Heart right ventricle (tissue), 16 donors: ENCODE measurements at regions of chr1 and their contacts with region 1.

Region 1: GRCh38 chr1:222124602-222125001 is 382.7 kb upstream of the DUSP10 start:
- DNase-seq: no peak
- ATAC-seq: no peak
- H3K4me3 ChIP-seq: no peak overlapping the region
- H3K27ac ChIP-seq: no peak overlapping the region
- H3K4me1 ChIP-seq: no peaks in the 10 kb centered on the region
- H3K27me3 ChIP-seq: peaks cover 0 to 4% (median 0%) of the 10 kb centered on the region in 7 donors
- CTCF ChIP-seq: peak in 1 of 9 donors; percentile 19

Region 2: GRCh38 chr1:222546548-222547259 is 422.1 kb after region 1 on chr1:
- intact Hi-C with region 1: loop called in 1 of 10 experiments (anchors 5 kb)
- DNase-seq: no peak
- ATAC-seq: peak in 1 of 8 donors; percentile 73
- H3K4me3 ChIP-seq: no peak overlapping the region
- H3K27ac ChIP-seq: no peak overlapping the region
- H3K4me1 ChIP-seq: no peaks in the 10 kb centered on the region
- H3K27me3 ChIP-seq: peaks cover 0 to 54% (median 44%) of the 10 kb centered on the region in 7 donors
- CTCF ChIP-seq: no peak